Activated B cell treated with CpG ODN at 0.5 μM for 24 hours (primary cell): ENCODE measurements at regions of chr1 and their contacts with region 1.

Region 1: DNA sequence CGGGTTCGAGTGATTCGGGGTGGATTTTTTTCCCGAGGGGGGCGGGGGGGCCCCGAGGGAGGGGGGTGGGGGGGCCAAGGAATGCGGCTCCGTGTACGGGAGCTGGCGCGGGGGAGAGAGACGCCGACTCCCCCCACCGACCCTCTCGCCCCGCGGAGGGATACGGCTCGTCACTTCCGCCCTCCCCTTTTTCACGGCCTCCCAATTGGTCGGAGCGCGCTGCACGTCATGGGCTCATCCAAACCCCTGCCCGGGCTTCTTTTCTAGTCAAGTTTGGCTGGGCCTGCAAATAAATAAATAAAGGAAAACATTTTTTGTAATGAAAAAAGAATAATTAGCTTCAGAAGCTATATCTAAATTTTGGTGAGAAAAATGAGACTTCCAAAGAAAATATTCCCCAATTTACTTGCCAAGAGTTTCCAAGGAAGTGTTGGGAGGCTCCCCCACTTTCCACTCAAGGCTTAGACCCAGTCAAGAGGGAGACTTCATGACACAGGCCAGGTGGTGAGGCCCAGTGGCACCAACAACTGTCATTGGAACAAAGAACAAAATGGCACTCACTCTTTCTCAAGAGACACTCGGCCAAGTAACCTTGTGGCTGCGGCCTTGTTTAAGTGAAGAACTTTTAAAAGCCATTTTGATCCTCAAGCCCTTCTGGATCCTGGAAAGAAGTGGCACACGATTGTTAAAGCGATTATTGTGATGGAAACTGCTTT is at the start of gene POGZ:
- DNase-seq: peak; percentile 84
- ATAC-seq: peak; percentile 68
- H3K4me3 Mint-ChIP-seq: peak within 1 kb of the TSS; percentile 89
- H3K27ac Mint-ChIP-seq: peak within 1 kb of the TSS; percentile 91
- H3K4me1 Mint-ChIP-seq: peaks cover 40% of the 10 kb centered on the region
- H3K27me3 Mint-ChIP-seq: peaks cover 15% of the 10 kb centered on the region
- CTCF ChIP-seq: no peak
- total RNA-seq, gene POGZ: 121 and 135 TPM in 2 replicates

Region 2: GRCh38 chr1:151377150-151377884 is 82.2 kb before region 1 on chr1:
- CTCF ChIA-PET with region 1: no interaction called
- POLR2A ChIA-PET with region 1: no interaction called
- intact Hi-C with region 1: no loop called
- DNase-seq: no peak
- ATAC-seq: no peak
- H3K4me3 Mint-ChIP-seq: no peak overlapping the region
- H3K27ac Mint-ChIP-seq: no peak overlapping the region
- H3K4me1 Mint-ChIP-seq: no peaks in the 10 kb centered on the region
- H3K27me3 Mint-ChIP-seq: no peaks in the 10 kb centered on the region
- CTCF ChIP-seq: no peak

Region 3: GRCh38 chr1:151405167-151405951 is 54.1 kb before region 1 on chr1:
- CTCF ChIA-PET with region 1: no interaction called
- POLR2A ChIA-PET with region 1: no interaction called
- intact Hi-C with region 1: no loop called
- DNase-seq: no peak
- ATAC-seq: no peak
- H3K4me3 Mint-ChIP-seq: no peak overlapping the region
- H3K27ac Mint-ChIP-seq: peak overlapping the region; percentile 6
- H3K4me1 Mint-ChIP-seq: peaks cover 12% of the 10 kb centered on the region
- H3K27me3 Mint-ChIP-seq: no peaks in the 10 kb centered on the region
- CTCF ChIP-seq: no peak

Region 4: GRCh38 chr1:151443846-151444782 is 15.4 kb before region 1 on chr1:
- CTCF ChIA-PET with region 1: interaction called, 4 read pairs
- POLR2A ChIA-PET with region 1: interaction called, 7 read pairs
- intact Hi-C with region 1: loop called (anchors 1 kb)
- DNase-seq: no peak
- ATAC-seq: peak; percentile 97
- H3K4me3 Mint-ChIP-seq: no peak overlapping the region
- H3K27ac Mint-ChIP-seq: peak overlapping the region; percentile 41
- H3K4me1 Mint-ChIP-seq: peaks cover 53% of the 10 kb centered on the region
- H3K27me3 Mint-ChIP-seq: no peaks in the 10 kb centered on the region
- CTCF ChIP-seq: no peak

Region 5: GRCh38 chr1:151491641-151492040 is 32.2 kb after region 1 on chr1:
- CTCF ChIA-PET with region 1: no interaction called
- POLR2A ChIA-PET with region 1: no interaction called
- intact Hi-C with region 1: no loop called
- DNase-seq: no peak
- ATAC-seq: no peak
- H3K4me3 Mint-ChIP-seq: no peak overlapping the region
- H3K27ac Mint-ChIP-seq: no peak overlapping the region
- H3K4me1 Mint-ChIP-seq: no peaks in the 10 kb centered on the region
- H3K27me3 Mint-ChIP-seq: peaks cover 3% of the 10 kb centered on the region
- CTCF ChIP-seq: no peak

Region 6: DNA sequence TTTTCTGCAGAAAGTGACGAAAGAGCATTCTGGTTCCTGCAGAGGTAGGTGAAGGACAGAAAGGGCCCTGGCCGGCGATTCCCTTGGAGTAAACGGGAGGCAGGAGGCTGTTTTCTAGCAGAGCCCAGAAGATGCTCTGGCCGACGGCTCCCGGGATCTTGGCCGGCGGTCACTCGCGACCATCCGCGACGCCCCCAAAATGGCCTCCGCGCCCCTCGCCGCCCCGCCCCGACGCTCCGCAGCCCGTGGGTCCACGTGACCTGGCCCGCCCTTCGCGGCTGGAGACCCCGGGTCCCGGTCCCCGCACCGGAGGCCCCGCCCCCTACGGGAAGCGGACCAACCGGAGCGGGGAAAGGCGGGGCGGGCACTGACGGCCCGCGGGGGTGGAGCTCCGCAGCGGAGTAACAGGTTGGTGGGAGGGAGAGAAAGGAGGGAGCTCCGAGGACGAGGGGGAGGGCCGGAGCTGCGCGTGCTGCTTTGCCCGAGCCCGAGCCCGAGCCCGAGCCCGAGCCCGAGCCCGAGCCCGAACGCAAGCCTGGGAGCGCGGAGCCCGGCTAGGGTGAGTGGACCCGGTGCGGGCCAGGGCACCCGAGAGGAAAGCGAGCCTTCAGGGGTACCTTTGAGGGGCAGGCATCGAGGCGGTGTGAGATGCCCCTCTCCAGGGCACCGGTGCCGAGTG is 51.6 kb after region 1 on chr1 and contains the start of gene CGN:
- CTCF ChIA-PET with region 1: no interaction called
- POLR2A ChIA-PET with region 1: interaction called, 10 read pairs
- intact Hi-C with region 1: loop called (anchors 2 kb)
- DNase-seq: peak; percentile 80
- ATAC-seq: peak; percentile 98
- H3K4me3 Mint-ChIP-seq: peak within 1 kb of the TSS; percentile 87
- H3K27ac Mint-ChIP-seq: peak within 1 kb of the TSS; percentile 36
- H3K4me1 Mint-ChIP-seq: peaks cover 19% of the 10 kb centered on the region
- H3K27me3 Mint-ChIP-seq: no peaks in the 10 kb centered on the region
- CTCF ChIP-seq: no peak
- total RNA-seq, gene CGN: 0.22 and 0.37 TPM in 2 replicates

Region 7: DNA sequence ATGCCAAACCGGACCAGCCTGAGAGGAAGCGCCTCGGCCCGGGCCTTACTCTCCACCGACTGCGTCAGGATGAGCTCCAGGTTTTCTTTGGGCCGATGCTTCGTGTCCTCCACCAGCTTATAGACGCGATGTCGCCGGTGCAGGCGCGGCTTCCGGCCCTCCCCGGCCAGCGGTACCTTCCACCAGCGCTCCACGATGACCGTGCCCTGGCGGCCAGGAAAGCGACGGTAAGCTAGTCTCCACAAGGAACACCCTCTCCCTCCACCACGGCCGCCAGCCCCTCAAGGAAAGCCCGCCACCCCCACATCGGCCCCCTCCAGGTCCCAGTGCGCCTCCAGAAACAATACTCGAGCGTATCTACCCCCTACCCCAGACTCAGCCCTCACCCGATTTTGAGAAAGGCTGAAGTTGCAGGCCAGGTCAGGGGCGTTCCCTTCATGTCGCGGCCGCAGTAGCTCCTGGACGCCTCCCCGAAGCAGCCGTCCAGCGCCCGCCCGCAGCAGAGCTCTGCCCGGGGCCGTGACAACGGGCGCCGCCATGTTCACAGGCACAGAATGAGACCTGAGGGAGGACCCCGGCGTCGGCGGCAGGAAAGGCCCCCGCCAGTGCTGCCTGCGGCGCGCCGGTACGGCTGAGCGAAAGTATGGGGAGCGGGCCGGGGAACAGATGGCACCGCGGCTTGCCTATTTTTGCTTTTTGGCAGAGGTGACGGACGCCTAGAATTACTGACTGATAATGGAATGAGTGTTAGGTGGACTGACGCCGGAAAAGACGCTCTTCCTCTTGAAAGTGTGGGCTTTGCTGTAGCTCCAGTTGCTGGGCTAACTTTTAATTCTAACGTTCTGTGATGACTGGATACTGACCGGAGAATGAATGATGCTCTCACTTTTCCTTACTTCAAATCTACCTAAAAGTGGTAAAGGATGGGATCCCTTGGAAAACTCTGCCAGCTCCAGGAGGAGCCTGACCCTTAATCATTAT is 303.7 kb after region 1 on chr1 and contains the start of gene MRPL9:
- CTCF ChIA-PET with region 1: no interaction called
- POLR2A ChIA-PET with region 1: interaction called, 6 read pairs
- intact Hi-C with region 1: loop called (anchors 5 kb)
- DNase-seq: peak; percentile 80
- ATAC-seq: peak; percentile 99
- H3K4me3 Mint-ChIP-seq: peak within 1 kb of the TSS; percentile 92
- H3K27ac Mint-ChIP-seq: peak within 1 kb of the TSS; percentile 91
- H3K4me1 Mint-ChIP-seq: peaks cover 20% of the 10 kb centered on the region
- H3K27me3 Mint-ChIP-seq: no peaks in the 10 kb centered on the region
- CTCF ChIP-seq: no peak
- total RNA-seq, gene MRPL9: 96.2 and 105 TPM in 2 replicates

Region 8: DNA sequence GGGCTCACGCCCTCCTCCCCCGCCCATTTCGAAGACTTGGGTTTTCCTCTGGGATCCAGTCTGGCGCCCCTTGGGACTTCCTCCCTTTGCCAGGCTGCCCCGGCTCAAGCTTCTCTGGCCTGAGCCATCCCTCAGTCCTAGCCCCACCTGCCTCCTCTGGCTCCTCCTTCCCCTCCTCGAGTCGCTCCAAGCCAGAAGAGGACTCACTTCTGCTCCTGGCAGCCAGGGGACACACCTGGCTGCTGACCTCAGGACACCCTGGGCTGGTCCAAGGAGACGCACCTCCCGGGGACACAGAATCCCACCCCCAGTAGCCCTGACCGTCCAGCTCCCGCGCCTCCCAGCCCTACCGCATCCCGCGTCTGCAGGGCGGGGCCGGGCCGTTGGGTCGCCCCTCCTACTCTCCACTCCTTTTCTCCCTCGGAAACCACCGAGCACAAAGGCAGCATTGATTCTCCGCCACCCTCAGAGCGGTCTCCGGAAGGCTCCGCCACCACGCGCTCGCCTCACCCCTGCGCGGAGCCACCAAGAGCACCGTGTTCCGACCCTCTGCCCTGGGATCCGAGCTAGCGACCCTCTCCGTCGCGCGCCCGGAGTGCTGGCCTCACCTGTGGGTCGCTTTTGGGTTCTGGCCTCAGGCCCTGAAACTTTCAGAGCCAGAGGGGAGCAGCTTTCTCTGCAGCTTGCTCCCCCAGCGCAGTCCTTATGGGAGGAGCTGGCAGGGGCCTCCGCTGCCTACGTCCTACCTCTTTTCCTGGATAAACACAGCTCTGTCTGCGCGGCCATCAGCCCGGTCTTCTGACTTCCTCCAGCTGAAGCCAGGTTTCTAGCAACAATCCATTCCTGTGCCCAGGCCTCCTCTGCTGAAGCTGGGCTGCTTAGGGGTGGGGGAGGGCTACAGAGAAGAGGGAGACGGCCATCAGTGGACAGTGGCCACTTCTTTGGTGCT is 380.2 kb after region 1 on chr1 and contains the start of gene C2CD4D:
- CTCF ChIA-PET with region 1: no interaction called
- POLR2A ChIA-PET with region 1: no interaction called
- intact Hi-C with region 1: loop called (anchors 5 kb)
- DNase-seq: peak; percentile 52
- ATAC-seq: peak; percentile 55
- H3K4me3 Mint-ChIP-seq: peak within 1 kb of the TSS; percentile 81
- H3K27ac Mint-ChIP-seq: peak within 1 kb of the TSS; percentile 35
- H3K4me1 Mint-ChIP-seq: peaks cover 52% of the 10 kb centered on the region
- H3K27me3 Mint-ChIP-seq: peaks cover 3% of the 10 kb centered on the region
- CTCF ChIP-seq: no peak
- total RNA-seq, gene C2CD4D: 0.15 TPM in 1 of 2 replicates, not detected in the other